ENCODE measurements at regions of chr3 and their contacts with region 1.

Region 1: DNA sequence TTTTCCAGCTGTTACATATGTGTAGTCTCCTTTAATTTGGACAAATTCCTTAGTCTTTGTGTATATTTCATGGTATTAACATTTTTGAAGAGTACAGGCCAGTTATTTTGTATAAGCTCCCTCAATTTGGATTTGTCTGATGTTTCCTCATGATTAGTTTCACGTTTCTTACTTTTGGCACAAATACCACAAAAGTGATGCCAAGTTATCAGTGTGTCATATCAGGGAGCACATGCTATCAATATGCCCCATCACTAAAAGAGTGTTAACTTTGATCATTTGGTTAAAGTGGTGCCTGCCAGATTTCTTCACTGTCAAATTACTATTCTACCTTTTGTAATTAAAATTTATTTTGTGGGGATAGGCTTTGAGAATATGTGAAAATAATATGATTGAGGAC is 14.6 kb downstream of the PCNP start:
- DNase-seq: no peak
- CTCF ChIP-seq: no peak

Region 2: DNA sequence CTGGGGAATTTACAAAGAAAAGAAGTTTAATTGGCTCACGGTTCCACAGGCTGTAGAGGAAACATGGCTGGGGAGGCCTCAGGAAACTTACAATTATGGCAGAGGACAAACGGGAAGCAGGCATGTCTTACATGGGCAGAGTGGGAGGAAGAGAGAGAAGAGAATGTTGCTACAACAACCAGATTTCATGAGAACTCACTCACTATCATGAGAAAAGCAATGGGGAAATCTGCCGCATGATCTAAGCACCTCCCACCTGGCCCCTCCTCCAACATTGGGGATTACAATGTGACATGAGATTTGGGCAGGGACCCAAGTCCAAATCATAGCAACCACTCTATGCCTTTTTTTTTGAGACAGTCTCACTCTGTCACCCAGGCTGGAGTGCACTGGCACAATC is 14.1 kb after region 1 on chr3:
- CTCF ChIA-PET with region 1: interaction called, 10 read pairs
- POLR2A ChIA-PET with region 1: no interaction called
- DNase-seq: no peak
- CTCF ChIP-seq: no peak

Measured in GM10248 (cell line).